BJ (cell line): ENCODE measurements at regions of chr20 and their contacts with region 1.

Region 1: DNA sequence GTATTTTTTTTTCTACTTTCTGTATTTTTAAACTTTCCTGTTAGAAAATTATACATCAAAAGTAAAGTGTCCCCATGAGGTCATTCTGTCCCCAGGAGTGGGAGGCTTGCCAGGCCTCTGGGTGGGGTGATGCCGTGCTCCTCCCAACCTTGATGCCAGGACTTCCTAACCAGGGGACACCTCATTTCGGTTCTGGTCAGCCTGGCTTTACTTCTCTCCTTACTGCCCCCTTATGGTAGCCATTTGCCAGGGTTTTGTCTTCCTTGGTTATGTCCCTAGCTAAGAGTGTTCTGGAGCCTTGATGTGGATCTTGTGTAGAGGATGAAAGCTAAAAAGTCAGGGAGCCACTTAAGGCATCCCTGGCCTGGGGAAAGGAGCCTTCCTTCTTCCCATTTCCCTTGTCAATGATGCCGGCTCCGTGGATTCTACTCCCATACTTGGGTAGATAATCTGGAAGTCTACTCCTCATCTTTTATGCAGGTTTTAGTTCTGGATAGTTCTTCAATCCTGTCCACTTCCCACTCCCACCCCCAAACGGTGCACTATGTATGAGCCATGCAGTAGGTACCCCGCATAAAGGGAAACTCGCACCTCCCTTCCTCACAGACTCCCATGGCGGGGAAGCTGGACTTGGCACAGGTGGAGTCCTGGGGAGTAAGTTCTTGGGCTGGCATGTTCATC is 164.1 kb upstream of the SALL4 start:
- DNase-seq: no peak
- H3K4me3 ChIP-seq: no peak overlapping the region
- H3K27me3 ChIP-seq: no peaks in the 10 kb centered on the region
- CTCF ChIP-seq: peak; percentile 83

Region 2: GRCh38 chr20:51978081-51978501 is 11.7 kb after region 1 on chr20:
- CTCF ChIA-PET with region 1: interaction called, 27 read pairs
- POLR2A ChIA-PET with region 1: no interaction called
- DNase-seq: no peak
- H3K4me3 ChIP-seq: no peak overlapping the region
- H3K27me3 ChIP-seq: no peaks in the 10 kb centered on the region
- CTCF ChIP-seq: no peak